Mammary epithelial cell (primary cell): ENCODE measurements at regions of chr2 and their contacts with region 1.

Region 1: DNA sequence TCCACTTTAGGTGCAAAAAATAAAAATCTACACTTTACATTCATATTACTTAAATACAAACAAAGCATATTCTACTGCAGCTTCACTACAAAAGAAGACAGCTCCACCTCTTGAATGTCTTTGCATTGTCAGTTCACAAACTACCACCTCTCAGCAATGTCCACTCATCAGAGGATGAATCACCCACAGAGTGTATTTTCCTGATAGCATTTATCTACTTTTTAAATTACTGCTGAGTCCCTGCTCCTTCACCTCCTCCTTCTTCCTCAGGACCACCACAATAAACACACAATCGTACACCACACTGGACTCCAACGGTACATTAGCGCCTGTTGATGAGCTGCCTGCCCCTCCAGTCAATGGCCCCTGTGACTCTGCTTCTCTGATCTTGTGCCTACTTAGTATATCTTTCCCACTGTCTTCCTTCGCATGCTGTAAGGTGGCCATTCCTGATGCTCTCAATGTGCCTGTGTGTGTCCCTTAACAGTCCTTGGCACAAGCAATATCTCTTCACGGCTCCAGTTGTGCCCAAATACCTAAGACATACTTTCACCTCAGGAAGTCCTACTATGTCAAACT is 120.9 kb downstream of the DHRS9 start:
- DNase-seq: no peak
- H3K4me3 ChIP-seq: no peak overlapping the region
- H3K27ac ChIP-seq: no peak overlapping the region
- H3K4me1 ChIP-seq: no peaks in the 10 kb centered on the region
- H3K27me3 ChIP-seq: peaks cover 3% of the 10 kb centered on the region
- CTCF ChIP-seq: no peak

Region 2: DNA sequence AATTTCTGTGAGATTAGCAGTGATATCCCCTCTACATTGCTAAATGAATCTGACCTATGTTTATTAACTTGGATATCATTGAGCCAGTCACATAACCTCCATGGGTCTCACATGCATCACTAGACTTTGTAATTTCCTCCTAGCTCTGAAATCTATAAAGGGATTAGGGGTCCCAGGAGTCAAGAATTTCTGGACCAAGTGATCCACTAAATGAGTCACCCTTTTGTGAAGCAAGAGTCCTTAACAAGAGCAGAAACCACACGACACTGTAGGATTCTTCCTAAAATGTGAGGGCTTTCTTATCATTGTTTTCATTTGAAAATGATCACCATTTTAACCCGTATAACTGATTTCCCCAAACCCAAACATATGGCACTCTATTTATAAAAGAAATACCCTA is 30.6 kb before region 1 on chr2:
- CTCF ChIA-PET with region 1: no interaction called
- dilution Hi-C with region 1: loop called (anchors 5 kb)
- in situ Hi-C with region 1: no loop called
- intact Hi-C with region 1: no loop called
- DNase-seq: no peak
- H3K4me3 ChIP-seq: no peak overlapping the region
- H3K27ac ChIP-seq: no peak overlapping the region
- H3K4me1 ChIP-seq: no peaks in the 10 kb centered on the region
- H3K27me3 ChIP-seq: peaks cover 5% of the 10 kb centered on the region
- CTCF ChIP-seq: no peak

Region 3: GRCh38 chr2:169324581-169325260 is 134.4 kb after region 1 on chr2:
- CTCF ChIA-PET with region 1: no interaction called
- dilution Hi-C with region 1: no loop called
- in situ Hi-C with region 1: no loop called
- intact Hi-C with region 1: no loop called
- DNase-seq: no peak
- H3K4me3 ChIP-seq: no peak overlapping the region
- H3K27ac ChIP-seq: no peak overlapping the region
- H3K4me1 ChIP-seq: no peaks in the 10 kb centered on the region
- H3K27me3 ChIP-seq: peaks cover 1% of the 10 kb centered on the region
- CTCF ChIP-seq: no peak